IMR-90 (cell line): ENCODE measurements at regions of chr21 and their contacts with region 1.

Region 1: DNA sequence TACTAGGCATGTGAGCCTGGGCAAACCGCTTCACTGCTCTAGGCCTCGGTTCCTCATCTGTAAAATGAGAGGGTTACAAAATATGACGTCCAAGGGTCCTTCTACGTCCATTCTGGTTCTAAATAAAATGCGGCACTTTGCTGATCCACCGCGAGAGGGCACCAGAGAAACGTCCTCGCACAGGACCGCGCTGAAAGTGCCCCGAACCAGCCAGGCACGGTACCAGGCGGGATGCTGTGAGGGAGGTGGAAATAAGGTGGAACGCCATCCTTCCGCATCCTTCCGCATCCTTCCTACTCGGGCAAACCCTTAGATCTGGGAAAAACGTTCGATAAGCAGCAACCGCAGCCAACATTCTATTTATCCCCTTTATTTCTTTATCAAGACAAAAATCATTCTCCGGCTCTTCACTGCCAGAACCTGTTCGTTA is 60.3 kb upstream of the KRTAP19-8 start:
- DNase-seq: peak; percentile 48
- ATAC-seq: peak; percentile 91
- H3K4me3 ChIP-seq: no peak overlapping the region
- H3K27ac ChIP-seq: no peak overlapping the region
- H3K4me1 ChIP-seq: no peaks in the 10 kb centered on the region
- H3K27me3 ChIP-seq: no peaks in the 10 kb centered on the region
- CTCF ChIP-seq: peak; percentile 92
- POLR2A ChIP-seq: 0 out of 2 replicates have a peak, but pooled peaks have one; percentile 40
- RAD21 ChIP-seq: peak; percentile 89

Region 2: GRCh38 chr21:29078869-29079767 is 2019.5 kb before region 1 on chr21:
- CTCF ChIA-PET with region 1: no interaction called
- POLR2A ChIA-PET with region 1: no interaction called
- dilution Hi-C with region 1: no loop called
- in situ Hi-C with region 1: loop called (anchors 25 kb)
- intact Hi-C with region 1: no loop called
- DNase-seq: no peak
- ATAC-seq: no peak
- H3K4me3 ChIP-seq: no peak overlapping the region
- H3K27ac ChIP-seq: no peak overlapping the region
- H3K4me1 ChIP-seq: peaks cover 10% of the 10 kb centered on the region
- H3K27me3 ChIP-seq: no peaks in the 10 kb centered on the region
- CTCF ChIP-seq: no peak
- POLR2A ChIP-seq: no peak
- RAD21 ChIP-seq: no peak

Region 3: GRCh38 chr21:30839304-30839703 is 259.3 kb before region 1 on chr21:
- CTCF ChIA-PET with region 1: no interaction called
- POLR2A ChIA-PET with region 1: no interaction called
- dilution Hi-C with region 1: no loop called
- in situ Hi-C with region 1: no loop called
- intact Hi-C with region 1: no loop called
- DNase-seq: no peak
- ATAC-seq: no peak
- H3K4me3 ChIP-seq: no peak overlapping the region
- H3K27ac ChIP-seq: no peak overlapping the region
- H3K4me1 ChIP-seq: no peaks in the 10 kb centered on the region
- H3K27me3 ChIP-seq: no peaks in the 10 kb centered on the region
- CTCF ChIP-seq: no peak
- POLR2A ChIP-seq: no peak
- RAD21 ChIP-seq: no peak

Region 4: GRCh38 chr21:31064803-31065202 is 33.8 kb before region 1 on chr21:
- CTCF ChIA-PET with region 1: no interaction called
- POLR2A ChIA-PET with region 1: no interaction called
- dilution Hi-C with region 1: no loop called
- in situ Hi-C with region 1: no loop called
- intact Hi-C with region 1: no loop called
- DNase-seq: no peak
- ATAC-seq: no peak
- H3K4me3 ChIP-seq: no peak overlapping the region
- H3K27ac ChIP-seq: no peak overlapping the region
- H3K4me1 ChIP-seq: no peaks in the 10 kb centered on the region
- H3K27me3 ChIP-seq: no peaks in the 10 kb centered on the region
- CTCF ChIP-seq: no peak
- POLR2A ChIP-seq: no peak
- RAD21 ChIP-seq: no peak

Region 5: DNA sequence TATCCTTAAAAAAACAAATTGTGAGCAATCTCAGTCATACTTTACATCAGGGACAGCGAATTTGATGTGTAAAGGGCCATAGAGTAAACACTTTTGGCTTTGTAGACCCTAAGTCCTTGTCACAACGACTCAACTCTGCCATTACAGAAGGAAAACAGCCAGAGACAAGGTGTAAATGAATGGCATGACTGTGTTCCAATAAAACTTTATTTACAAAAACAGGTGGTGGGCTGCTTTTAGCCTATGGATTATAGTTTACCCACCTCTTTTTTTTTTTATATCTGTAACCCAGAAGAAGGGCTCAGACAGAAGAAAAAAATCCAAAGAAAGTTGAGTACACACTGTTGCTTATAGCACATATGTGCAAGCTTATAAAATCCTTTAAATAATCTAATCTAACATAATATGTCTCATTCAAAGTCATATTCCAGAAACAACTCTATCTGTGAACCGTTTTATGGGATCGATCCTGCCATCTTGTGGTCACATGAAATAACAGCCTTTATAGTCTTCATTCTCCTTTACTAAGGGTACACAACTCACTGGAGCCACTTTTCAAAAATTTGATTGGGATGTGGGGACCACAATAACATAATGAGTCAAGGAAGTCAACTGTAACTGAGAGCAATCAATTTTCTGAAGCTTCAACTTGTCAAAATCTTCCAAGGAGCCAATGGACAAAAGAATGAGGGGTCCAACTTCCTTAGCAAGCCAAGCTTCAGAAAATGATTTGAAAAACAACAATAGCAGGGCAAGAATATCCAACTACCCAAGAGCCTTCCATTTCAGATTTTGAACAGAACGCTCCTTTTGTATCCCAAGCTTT is 81.9 kb after region 1 on chr21:
- CTCF ChIA-PET with region 1: interaction called, 9 read pairs
- POLR2A ChIA-PET with region 1: no interaction called
- dilution Hi-C with region 1: no loop called
- in situ Hi-C with region 1: loop called (anchors 5 kb)
- intact Hi-C with region 1: loop called (anchors 1 kb)
- DNase-seq: peak; percentile 54
- ATAC-seq: peak; percentile 82
- H3K4me3 ChIP-seq: no peak overlapping the region
- H3K27ac ChIP-seq: no peak overlapping the region
- H3K4me1 ChIP-seq: no peaks in the 10 kb centered on the region
- H3K27me3 ChIP-seq: no peaks in the 10 kb centered on the region
- CTCF ChIP-seq: peak; percentile 65
- POLR2A ChIP-seq: no peak
- RAD21 ChIP-seq: peak; percentile 63

Region 6: GRCh38 chr21:31580866-31581276 is 482.3 kb after region 1 on chr21:
- CTCF ChIA-PET with region 1: interaction called, 7 read pairs
- POLR2A ChIA-PET with region 1: no interaction called
- dilution Hi-C with region 1: no loop called
- in situ Hi-C with region 1: no loop called
- intact Hi-C with region 1: loop called (anchors 1 kb)
- DNase-seq: peak; percentile 61
- ATAC-seq: peak; percentile 100
- H3K4me3 ChIP-seq: no peak overlapping the region
- H3K27ac ChIP-seq: no peak overlapping the region
- H3K4me1 ChIP-seq: no peaks in the 10 kb centered on the region
- H3K27me3 ChIP-seq: peaks cover 2% of the 10 kb centered on the region
- CTCF ChIP-seq: peak; percentile 84
- POLR2A ChIP-seq: no peak
- RAD21 ChIP-seq: peak; percentile 84

Region 7: DNA sequence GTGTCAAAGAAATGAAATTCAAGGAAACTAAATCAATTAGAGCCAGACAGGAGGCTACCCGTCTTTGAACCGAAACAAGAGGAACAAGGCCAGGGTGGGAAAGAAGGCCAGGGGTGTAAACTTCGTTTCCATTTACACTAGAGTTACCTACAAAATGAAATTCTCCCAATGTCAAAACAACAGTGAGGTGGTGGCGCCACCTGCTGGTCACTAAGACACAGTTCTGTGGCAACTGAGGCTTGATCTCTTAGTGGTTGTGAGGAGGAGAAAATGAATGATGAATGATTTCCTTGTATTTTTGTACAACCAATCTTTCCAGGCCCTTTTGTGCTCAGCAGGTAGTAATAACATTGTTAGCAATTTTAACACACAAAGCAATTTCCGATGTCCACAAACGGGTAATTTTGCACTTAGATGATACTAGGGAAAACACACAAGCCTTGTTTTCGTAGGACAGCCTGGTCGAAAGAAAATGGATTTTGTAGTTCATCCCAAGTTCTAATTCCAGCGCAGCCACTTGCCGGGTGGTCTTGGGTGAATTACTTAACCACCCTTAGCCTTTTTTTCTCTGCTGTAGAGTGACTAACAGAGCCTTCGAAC is 506.1 kb after region 1 on chr21:
- CTCF ChIA-PET with region 1: interaction called, 5 read pairs
- POLR2A ChIA-PET with region 1: no interaction called
- dilution Hi-C with region 1: no loop called
- in situ Hi-C with region 1: loop called (anchors 5 kb)
- intact Hi-C with region 1: loop called (anchors 1 kb)
- DNase-seq: peak; percentile 54
- ATAC-seq: peak; percentile 86
- H3K4me3 ChIP-seq: no peak overlapping the region
- H3K27ac ChIP-seq: no peak overlapping the region
- H3K4me1 ChIP-seq: no peaks in the 10 kb centered on the region
- H3K27me3 ChIP-seq: no peaks in the 10 kb centered on the region; the same call in 1 of the 2 replicates
- CTCF ChIP-seq: peak; percentile 80
- POLR2A ChIP-seq: no peak
- RAD21 ChIP-seq: peak; percentile 87